Ovary (tissue), 10 donors: ENCODE measurements at regions of chr4 and their contacts with region 1.

Region 1: DNA sequence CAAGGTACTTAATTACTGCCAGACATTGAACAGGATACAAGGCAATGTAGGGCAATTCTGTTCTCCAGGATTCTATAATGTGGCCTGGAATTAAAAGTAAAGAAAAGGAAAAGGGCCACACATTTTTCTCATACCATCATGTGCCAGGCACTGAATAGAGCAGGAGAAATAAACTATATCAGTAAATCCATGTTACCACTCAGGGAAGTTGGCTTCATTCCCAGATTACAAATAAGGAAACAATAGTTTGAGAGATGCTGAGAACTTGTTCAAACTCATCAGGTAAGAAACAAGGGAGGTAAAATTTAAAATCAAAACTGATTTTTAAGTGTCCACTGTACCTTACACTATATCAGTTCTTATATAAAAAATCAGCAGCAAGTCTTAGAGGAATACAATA is 645.0 kb upstream of the ATOH1 start:
- DNase-seq: no peak
- H3K4me3 ChIP-seq: no peak overlapping the region
- H3K27ac ChIP-seq: no peak overlapping the region
- H3K4me1 ChIP-seq: no peaks in the 10 kb centered on the region
- H3K27me3 ChIP-seq: no peaks in the 10 kb centered on the region
- CTCF ChIP-seq: no peak
- EP300 ChIP-seq: no peak
- POLR2A ChIP-seq: no peak

Region 2: GRCh38 chr4:92447255-92447905 is 736.2 kb before region 1 on chr4:
- intact Hi-C with region 1: loop called in 1 of 4 experiments (anchors 10 kb)
- DNase-seq: no peak
- H3K4me3 ChIP-seq: no peak overlapping the region
- H3K27ac ChIP-seq: no peak overlapping the region
- H3K4me1 ChIP-seq: no peaks in the 10 kb centered on the region
- H3K27me3 ChIP-seq: no peaks in the 10 kb centered on the region
- CTCF ChIP-seq: no peak
- EP300 ChIP-seq: no peak
- POLR2A ChIP-seq: no peak

Region 3: GRCh38 chr4:92969650-92970370 is 213.8 kb before region 1 on chr4:
- intact Hi-C with region 1: no loop called
- DNase-seq: no peak
- H3K4me3 ChIP-seq: no peak overlapping the region
- H3K27ac ChIP-seq: no peak overlapping the region
- H3K4me1 ChIP-seq: no peaks in the 10 kb centered on the region
- H3K27me3 ChIP-seq: no peaks in the 10 kb centered on the region
- CTCF ChIP-seq: no peak
- EP300 ChIP-seq: no peak
- POLR2A ChIP-seq: no peak

Region 4: GRCh38 chr4:93960450-93960849 is 776.9 kb after region 1 on chr4:
- intact Hi-C with region 1: no loop called
- DNase-seq: no peak
- H3K4me3 ChIP-seq: no peak overlapping the region
- H3K27ac ChIP-seq: no peak overlapping the region
- H3K4me1 ChIP-seq: no peaks in the 10 kb centered on the region
- H3K27me3 ChIP-seq: no peaks in the 10 kb centered on the region
- CTCF ChIP-seq: no peak
- EP300 ChIP-seq: no peak
- POLR2A ChIP-seq: no peak